GM10248 (cell line): ENCODE measurements at regions of chr14 and their contacts with region 1.

Region 1: GRCh38 chr14:55624913-55625312 is 44.9 kb downstream of the KTN1 start:
- DNase-seq: no peak
- CTCF ChIP-seq: no peak

Region 2: GRCh38 chr14:55638665-55639064 is 13.8 kb after region 1 on chr14:
- CTCF ChIA-PET with region 1: interaction called, 13 read pairs
- POLR2A ChIA-PET with region 1: no interaction called
- DNase-seq: no peak
- CTCF ChIP-seq: no peak